ENCODE measurements at regions of chr4 and their contacts with region 1.

Region 1: GRCh38 chr4:140359562-140360427 is 13.7 kb upstream of the SCOC start:
- DNase-seq: peak; percentile 50 to 88
- ATAC-seq: peak; percentile 79 to 92 (median 86)
- H3K4me3 ChIP-seq: no peak overlapping the region
- H3K4me3 Mint-ChIP-seq: no peak overlapping the region
- H3K27ac ChIP-seq: no peak overlapping the region
- H3K27ac Mint-ChIP-seq: no peak overlapping the region
- H3K4me1 ChIP-seq: no peaks in the 10 kb centered on the region
- H3K4me1 Mint-ChIP-seq: peaks cover 0 to 5% of the 10 kb centered on the region in 2 donors
- H3K27me3 ChIP-seq: no peaks in the 10 kb centered on the region
- H3K27me3 Mint-ChIP-seq: peaks cover 3 to 38% of the 10 kb centered on the region in 2 donors
- CTCF ChIP-seq: peak; percentile 92

Region 2: DNA sequence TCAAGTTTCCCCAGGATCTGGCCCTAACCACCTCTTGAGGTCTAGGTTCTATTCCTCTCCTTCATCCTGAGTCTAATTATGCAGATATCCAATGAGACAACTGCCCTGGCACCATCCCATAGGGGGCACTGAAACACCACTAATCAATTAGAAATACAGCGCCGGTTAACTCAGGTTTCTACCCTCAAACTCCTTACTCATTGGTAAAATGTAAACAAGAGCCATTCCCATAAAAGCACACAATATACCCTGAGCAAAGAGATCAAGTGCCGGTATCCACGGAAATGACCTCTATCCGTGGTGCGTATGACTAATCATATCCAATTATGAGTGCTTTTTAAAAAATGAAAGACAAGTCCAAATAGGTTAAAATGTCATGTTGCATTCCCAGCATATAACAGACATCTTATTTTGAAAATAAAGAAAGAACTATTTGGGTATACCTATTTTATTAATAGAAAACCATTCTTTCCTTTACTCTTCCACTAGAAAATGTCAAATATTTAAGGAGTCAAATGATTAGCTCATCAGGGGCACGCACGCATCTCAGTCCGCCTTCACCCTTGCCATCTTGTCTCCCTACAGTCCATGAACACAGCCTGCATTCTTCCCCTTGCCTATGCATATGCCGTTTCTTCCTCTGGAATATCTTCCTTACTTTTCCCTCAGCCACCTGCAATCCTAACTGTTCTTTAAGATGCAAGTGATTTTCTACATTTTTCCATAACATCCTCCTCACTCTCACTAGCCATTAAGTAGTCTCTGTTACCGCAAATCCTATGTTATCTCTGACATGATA is 346.9 kb before region 1 on chr4:
- intact Hi-C with region 1: loop called (anchors 1 kb)
- DNase-seq: peak in 1 of 2 donors; percentile 81
- ATAC-seq: peak; percentile 79 to 91 (median 81)
- H3K4me3 ChIP-seq: no peak overlapping the region
- H3K4me3 Mint-ChIP-seq: no peak overlapping the region
- H3K27ac ChIP-seq: no peak overlapping the region
- H3K27ac Mint-ChIP-seq: no peak overlapping the region
- H3K4me1 ChIP-seq: no peaks in the 10 kb centered on the region
- H3K4me1 Mint-ChIP-seq: peaks cover 6 to 9% of the 10 kb centered on the region in 2 donors
- H3K27me3 ChIP-seq: no peaks in the 10 kb centered on the region
- H3K27me3 Mint-ChIP-seq: peaks cover 21 to 36% of the 10 kb centered on the region in 2 donors
- CTCF ChIP-seq: peak; percentile 66

Region 3: DNA sequence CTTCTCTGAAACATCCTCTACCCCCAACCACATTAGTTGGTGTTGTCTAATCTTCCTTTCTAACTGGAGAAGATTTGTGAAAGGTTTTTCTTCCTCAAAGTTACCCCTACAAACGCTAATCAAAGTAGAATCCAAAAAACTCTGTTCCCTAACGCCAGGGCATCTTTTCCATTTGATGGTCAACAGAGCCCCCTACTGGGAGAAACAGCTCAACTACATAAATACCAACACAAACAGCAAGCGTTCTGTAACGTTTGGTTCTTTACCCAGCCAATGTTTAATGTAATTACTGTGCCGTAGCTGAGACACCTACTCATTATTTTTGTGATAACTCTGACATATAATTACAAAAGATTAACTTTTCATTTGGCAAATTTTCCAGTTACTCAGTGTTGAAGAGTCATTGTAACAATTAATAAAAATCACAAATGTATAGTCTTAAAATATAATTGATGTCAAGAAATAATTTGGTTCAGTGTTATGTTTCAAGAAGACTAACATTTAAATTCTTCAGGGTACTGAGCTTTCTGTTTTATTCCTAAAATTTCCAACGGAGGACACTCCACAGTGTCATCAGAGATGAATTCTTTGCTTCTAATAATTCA is 491.3 kb after region 1 on chr4:
- intact Hi-C with region 1: loop called (anchors 2 kb)
- DNase-seq: peak in 1 of 2 donors; percentile 34
- ATAC-seq: no peak
- H3K4me3 ChIP-seq: no peak overlapping the region
- H3K4me3 Mint-ChIP-seq: no peak overlapping the region
- H3K27ac ChIP-seq: no peak overlapping the region
- H3K27ac Mint-ChIP-seq: no peak overlapping the region
- H3K4me1 ChIP-seq: no peaks in the 10 kb centered on the region
- H3K4me1 Mint-ChIP-seq: no peaks in the 10 kb centered on the region
- H3K27me3 ChIP-seq: no peaks in the 10 kb centered on the region
- H3K27me3 Mint-ChIP-seq: peaks cover 13 to 16% of the 10 kb centered on the region in 2 donors
- CTCF ChIP-seq: peak; percentile 46

Region 4: GRCh38 chr4:140952717-140953116 is 592.9 kb after region 1 on chr4:
- intact Hi-C with region 1: no loop called
- DNase-seq: no peak
- ATAC-seq: no peak
- H3K4me3 ChIP-seq: no peak overlapping the region
- H3K4me3 Mint-ChIP-seq: no peak overlapping the region
- H3K27ac ChIP-seq: no peak overlapping the region
- H3K27ac Mint-ChIP-seq: no peak overlapping the region
- H3K4me1 ChIP-seq: no peaks in the 10 kb centered on the region
- H3K4me1 Mint-ChIP-seq: no peaks in the 10 kb centered on the region
- H3K27me3 ChIP-seq: no peaks in the 10 kb centered on the region
- H3K27me3 Mint-ChIP-seq: no peaks in the 10 kb centered on the region
- CTCF ChIP-seq: no peak